A673 (cell line): ENCODE measurements at regions of chrX and their contacts with region 1.

Region 1: GRCh38 chrX:40266490-40267333 is 169.0 kb upstream of the BCOR start:
- DNase-seq: peak; percentile 79
- H3K4me3 ChIP-seq: peak overlapping the region; percentile 48
- H3K27ac ChIP-seq: peak overlapping the region; percentile 65
- H3K4me1 ChIP-seq: peaks cover 17% of the 10 kb centered on the region
- H3K27me3 ChIP-seq: no peaks in the 10 kb centered on the region
- CTCF ChIP-seq: peak; percentile 70

Region 2: DNA sequence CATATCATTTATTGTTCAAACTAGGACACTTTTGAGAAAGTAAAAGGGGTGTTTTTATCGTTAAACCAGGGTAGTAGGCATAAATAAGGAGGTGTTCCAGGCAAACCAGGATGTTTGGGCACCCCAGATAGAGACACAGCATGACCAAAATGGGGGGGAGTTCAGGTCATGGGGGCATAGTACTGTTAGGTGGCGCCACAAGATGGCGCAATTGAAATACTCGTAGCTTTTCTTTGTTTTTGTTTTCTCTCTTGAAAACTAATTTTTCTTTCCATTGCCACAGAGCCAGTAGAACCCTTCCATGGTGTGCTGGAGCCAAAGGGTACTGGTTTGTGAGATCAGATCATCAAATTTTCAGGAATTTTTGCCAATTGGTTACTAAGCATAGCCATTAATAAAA is 452.3 kb before region 1 on chrX:
- CTCF ChIA-PET with region 1: no interaction called
- POLR2A ChIA-PET with region 1: no interaction called
- intact Hi-C with region 1: loop called (anchors 10 kb)
- DNase-seq: peak; percentile 35
- H3K4me3 ChIP-seq: no peak overlapping the region
- H3K27ac ChIP-seq: no peak overlapping the region
- H3K4me1 ChIP-seq: peaks cover 16% of the 10 kb centered on the region
- H3K27me3 ChIP-seq: no peaks in the 10 kb centered on the region
- CTCF ChIP-seq: peak; percentile 61

Region 3: DNA sequence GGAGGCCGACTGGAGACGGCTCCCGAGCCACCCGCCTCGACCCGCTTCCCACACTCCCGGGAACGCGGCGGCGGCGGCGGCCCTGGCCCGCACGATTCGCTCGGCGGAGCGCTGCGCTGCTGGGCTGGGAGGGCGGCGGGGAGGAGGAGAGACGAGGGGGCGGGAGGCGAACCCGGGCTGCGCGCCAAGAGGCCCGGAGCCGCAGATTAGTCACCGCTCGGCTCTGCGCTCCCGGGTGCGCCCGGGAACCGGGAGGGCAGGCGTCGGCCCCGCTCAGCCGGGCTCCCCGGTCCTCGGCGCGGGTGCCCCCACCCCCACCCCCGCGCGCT is 157.8 kb before region 1 on chrX:
- CTCF ChIA-PET with region 1: no interaction called
- POLR2A ChIA-PET with region 1: no interaction called
- intact Hi-C with region 1: loop called (anchors 10 kb)
- DNase-seq: peak; percentile 81
- H3K4me3 ChIP-seq: peak overlapping the region; percentile 59
- H3K27ac ChIP-seq: peak overlapping the region; percentile 88
- H3K4me1 ChIP-seq: peaks cover 28% of the 10 kb centered on the region
- H3K27me3 ChIP-seq: no peaks in the 10 kb centered on the region
- CTCF ChIP-seq: no peak

Region 4: DNA sequence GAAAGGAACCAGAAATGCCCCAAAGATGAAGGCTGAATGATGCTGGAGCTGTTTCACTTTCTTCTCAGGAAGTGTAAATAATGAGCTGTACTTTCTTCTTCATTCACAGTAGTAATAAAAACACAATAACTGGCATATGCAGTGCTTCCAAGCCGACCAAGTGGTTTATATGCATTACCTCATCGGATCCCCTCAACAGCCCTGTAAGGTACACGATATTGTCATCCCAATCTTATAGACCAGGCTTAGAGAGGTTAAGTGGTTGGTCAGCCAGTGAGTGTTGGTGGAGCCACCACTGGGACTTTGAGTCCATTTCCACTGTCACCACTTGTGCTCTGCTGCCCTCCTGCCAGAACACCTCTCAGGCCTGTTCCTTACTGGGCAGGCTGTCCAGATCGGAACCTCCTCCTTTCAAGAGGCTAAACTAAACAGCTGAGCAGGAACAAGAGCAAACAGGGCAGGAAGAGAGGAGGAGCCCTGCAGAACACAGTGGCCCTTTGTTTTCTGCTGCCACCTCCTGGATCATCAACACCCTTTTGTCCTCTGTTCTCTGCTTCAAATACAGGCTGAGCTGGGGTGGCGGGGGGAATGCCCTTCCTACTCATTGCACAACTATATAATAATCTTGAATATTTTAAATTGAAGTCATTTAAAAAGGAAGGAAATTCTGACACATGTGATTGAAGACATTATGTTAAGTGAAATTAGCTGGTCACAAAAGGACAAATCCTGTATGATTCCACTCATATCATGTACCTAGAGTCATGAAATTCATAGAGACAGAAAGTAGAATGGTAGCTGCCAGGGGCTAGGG is 201.5 kb after region 1 on chrX:
- CTCF ChIA-PET with region 1: no interaction called
- POLR2A ChIA-PET with region 1: no interaction called
- intact Hi-C with region 1: loop called (anchors 5 kb)
- DNase-seq: peak; percentile 66
- H3K4me3 ChIP-seq: no peak overlapping the region
- H3K27ac ChIP-seq: no peak overlapping the region
- H3K4me1 ChIP-seq: peaks cover 32% of the 10 kb centered on the region
- H3K27me3 ChIP-seq: no peaks in the 10 kb centered on the region
- CTCF ChIP-seq: peak; percentile 49

Region 5: DNA sequence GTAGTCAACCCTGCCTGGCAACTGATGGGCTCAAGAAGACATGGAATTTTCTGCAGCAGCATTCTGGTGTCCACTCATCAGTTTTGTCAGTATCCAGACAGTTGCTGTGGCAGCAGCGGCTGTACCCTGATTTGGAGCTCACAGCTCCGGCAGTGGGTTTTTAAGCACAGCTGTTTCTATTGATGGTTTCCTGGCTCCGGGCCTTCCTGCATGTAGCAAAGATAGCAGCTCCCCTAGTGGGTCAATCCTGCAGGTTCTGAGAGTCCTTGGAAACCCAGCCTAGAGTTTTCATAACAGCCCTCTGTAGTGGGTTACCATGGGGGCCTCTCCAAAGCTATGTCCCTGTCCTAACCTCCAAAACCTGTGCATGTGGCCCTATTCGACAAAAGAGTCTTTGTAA is 230.0 kb after region 1 on chrX:
- CTCF ChIA-PET with region 1: no interaction called
- POLR2A ChIA-PET with region 1: interaction called, 25 read pairs
- intact Hi-C with region 1: no loop called
- DNase-seq: peak; percentile 14
- H3K4me3 ChIP-seq: no peak overlapping the region
- H3K27ac ChIP-seq: no peak overlapping the region
- H3K4me1 ChIP-seq: no peaks in the 10 kb centered on the region
- H3K27me3 ChIP-seq: no peaks in the 10 kb centered on the region
- CTCF ChIP-seq: 0 out of 2 replicates have a peak, but pooled peaks have one; percentile 8